IMR-90 (cell line): ENCODE measurements at regions of chr13 and their contacts with region 1.

Region 1: DNA sequence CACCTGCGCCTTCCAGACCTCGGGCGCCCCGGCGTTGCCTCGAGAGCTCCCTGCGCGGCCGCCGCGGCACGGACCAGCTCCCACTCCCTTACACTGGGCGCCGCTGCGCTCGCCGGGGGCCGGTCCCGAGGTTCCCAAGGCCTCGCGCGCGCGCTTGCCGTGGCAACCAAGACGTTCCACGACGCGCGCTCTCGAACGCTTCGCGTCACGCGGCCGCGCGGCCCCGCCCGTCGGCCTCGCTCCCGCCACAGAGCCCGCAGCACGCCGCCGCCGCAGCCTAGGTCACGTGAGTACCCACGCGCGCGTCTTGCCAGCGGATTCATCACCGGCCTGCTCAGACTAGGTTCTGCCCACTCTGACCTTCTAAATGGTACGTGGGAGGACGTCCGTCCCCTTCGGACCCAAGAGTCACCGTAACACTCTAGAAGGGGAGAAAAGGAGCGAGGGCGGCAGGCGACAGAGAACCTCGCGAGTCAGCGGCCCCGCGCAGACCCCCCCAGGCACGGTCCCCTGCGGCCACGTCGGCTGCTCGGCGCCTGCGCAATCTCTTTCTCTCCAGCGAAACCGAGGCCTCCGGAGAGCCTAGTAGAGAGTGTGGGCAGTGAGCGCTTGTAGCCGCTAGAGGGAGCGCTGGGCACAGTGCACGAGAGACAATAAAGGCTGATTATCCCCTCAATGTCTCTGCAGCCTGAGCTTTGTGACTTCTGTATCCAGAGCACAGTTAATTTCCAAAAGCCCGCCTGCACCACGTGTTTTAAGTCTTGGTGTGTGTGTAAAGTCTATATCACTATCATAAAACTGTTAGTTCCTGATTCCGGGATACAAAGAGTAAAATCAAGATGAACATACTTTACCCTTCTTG is at the start of gene SPART:
- DNase-seq: peak; percentile 88
- ATAC-seq: peak; percentile 89
- H3K4me3 ChIP-seq: peak within 1 kb of the TSS; percentile 82
- H3K27ac ChIP-seq: peak within 1 kb of the TSS; percentile 96
- H3K4me1 ChIP-seq: peaks cover 5% of the 10 kb centered on the region; the same call in 1 of the 2 replicates
- H3K27me3 ChIP-seq: no peaks in the 10 kb centered on the region
- CTCF ChIP-seq: peak; percentile 99
- POLR2A ChIP-seq: peak; percentile 66
- RAD21 ChIP-seq: peak; percentile 86
- total RNA-seq, gene SPART: 86.4 and 110 TPM in 2 replicates

Region 2: DNA sequence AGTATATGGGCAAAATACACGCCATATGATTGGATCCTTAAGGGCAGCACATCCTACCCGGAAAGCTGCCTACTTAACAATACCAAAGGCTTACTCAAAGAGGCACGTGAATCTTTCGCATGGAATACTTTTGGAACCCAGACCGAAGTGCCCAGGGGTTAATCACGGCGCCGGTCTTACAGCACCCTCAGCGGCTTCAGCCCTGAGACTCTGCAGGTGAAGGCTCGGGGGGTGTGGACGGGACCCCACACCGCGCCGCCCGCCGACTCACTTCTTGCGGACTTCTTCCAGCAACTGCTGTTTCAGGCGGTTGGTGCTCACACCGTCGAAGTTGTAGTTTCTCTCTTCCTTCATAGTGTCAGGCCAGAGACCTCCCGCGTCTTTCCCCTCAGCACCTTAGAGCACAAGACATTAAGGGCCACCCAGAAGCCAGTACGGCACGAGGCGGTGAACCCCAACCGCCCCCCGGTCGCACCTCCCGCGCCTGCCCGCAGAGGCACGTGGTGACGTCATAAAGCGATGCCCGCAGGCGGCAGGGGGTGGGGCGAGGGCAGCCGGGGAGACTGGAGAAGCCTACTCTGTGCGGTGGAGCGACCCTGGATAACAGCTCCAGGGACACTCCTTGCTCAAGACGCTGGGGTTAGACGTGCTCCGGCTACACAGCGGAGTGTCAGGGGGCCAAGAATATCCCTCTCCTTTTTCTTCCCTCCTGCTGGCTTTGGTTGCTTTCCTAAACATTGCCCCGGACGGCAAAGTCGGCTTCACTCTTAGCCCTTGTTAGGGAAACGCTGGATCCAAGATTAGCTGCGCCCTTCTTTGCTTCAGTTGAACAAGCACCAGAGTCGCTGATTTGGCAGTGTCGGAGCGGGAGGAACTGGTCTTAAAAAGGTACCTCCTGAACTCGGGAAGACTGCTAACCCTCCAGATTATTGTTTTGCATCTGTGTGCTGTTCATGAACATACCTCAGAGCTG is 48.8 kb before region 1 on chr13 and contains the start of gene CCDC169:
- CTCF ChIA-PET with region 1: interaction called, 4 read pairs
- POLR2A ChIA-PET with region 1: interaction called, 9 read pairs
- dilution Hi-C with region 1: no loop called
- in situ Hi-C with region 1: no loop called
- intact Hi-C with region 1: loop called (anchors 5 kb)
- DNase-seq: peak; percentile 51
- ATAC-seq: peak; percentile 93
- H3K4me3 ChIP-seq: peak within 1 kb of the TSS; percentile 67
- H3K27ac ChIP-seq: peak within 1 kb of the TSS; percentile 56
- H3K4me1 ChIP-seq: peaks cover 2% of the 10 kb centered on the region; the same call in 1 of the 2 replicates
- H3K27me3 ChIP-seq: no peaks in the 10 kb centered on the region
- CTCF ChIP-seq: no peak
- POLR2A ChIP-seq: no peak
- RAD21 ChIP-seq: no peak
- total RNA-seq, gene CCDC169: 0.54 and 0.83 TPM in 2 replicates

Region 3: GRCh38 chr13:36395280-36395679 is 48.8 kb after region 1 on chr13:
- CTCF ChIA-PET with region 1: interaction called, 4 read pairs
- POLR2A ChIA-PET with region 1: no interaction called
- dilution Hi-C with region 1: no loop called
- in situ Hi-C with region 1: no loop called
- intact Hi-C with region 1: loop called (anchors 1 kb)
- DNase-seq: peak; percentile 66
- ATAC-seq: peak; percentile 93
- H3K4me3 ChIP-seq: no peak overlapping the region
- H3K27ac ChIP-seq: no peak overlapping the region
- H3K4me1 ChIP-seq: no peaks in the 10 kb centered on the region
- H3K27me3 ChIP-seq: peaks cover 2% of the 10 kb centered on the region; the same call in 1 of the 2 replicates
- CTCF ChIP-seq: peak; percentile 71
- POLR2A ChIP-seq: no peak
- RAD21 ChIP-seq: peak; percentile 60

Region 4: GRCh38 chr13:36736119-36736726 is 389.8 kb after region 1 on chr13:
- CTCF ChIA-PET with region 1: interaction called, 5 read pairs
- POLR2A ChIA-PET with region 1: no interaction called
- dilution Hi-C with region 1: no loop called
- in situ Hi-C with region 1: no loop called
- intact Hi-C with region 1: loop called (anchors 1 kb)
- DNase-seq: peak; percentile 62
- ATAC-seq: peak; percentile 74
- H3K4me3 ChIP-seq: no peak overlapping the region
- H3K27ac ChIP-seq: no peak overlapping the region
- H3K4me1 ChIP-seq: no peaks in the 10 kb centered on the region
- H3K27me3 ChIP-seq: peaks cover 2% of the 10 kb centered on the region; the same call in 1 of the 2 replicates
- CTCF ChIP-seq: peak; percentile 64
- POLR2A ChIP-seq: no peak
- RAD21 ChIP-seq: peak; percentile 60

Region 5: GRCh38 chr13:36778083-36778671 is 431.7 kb after region 1 on chr13:
- CTCF ChIA-PET with region 1: no interaction called
- POLR2A ChIA-PET with region 1: no interaction called
- dilution Hi-C with region 1: no loop called
- in situ Hi-C with region 1: no loop called
- intact Hi-C with region 1: loop called (anchors 1 kb)
- DNase-seq: peak; percentile 74
- ATAC-seq: peak; percentile 94
- H3K4me3 ChIP-seq: peak overlapping the region; percentile 53
- H3K27ac ChIP-seq: peak overlapping the region; percentile 65; the same call in 1 of the 2 replicates
- H3K4me1 ChIP-seq: peaks cover 4% of the 10 kb centered on the region; the same call in 1 of the 2 replicates
- H3K27me3 ChIP-seq: peaks cover 2% of the 10 kb centered on the region
- CTCF ChIP-seq: no peak
- POLR2A ChIP-seq: no peak
- RAD21 ChIP-seq: no peak

Region 6: DNA sequence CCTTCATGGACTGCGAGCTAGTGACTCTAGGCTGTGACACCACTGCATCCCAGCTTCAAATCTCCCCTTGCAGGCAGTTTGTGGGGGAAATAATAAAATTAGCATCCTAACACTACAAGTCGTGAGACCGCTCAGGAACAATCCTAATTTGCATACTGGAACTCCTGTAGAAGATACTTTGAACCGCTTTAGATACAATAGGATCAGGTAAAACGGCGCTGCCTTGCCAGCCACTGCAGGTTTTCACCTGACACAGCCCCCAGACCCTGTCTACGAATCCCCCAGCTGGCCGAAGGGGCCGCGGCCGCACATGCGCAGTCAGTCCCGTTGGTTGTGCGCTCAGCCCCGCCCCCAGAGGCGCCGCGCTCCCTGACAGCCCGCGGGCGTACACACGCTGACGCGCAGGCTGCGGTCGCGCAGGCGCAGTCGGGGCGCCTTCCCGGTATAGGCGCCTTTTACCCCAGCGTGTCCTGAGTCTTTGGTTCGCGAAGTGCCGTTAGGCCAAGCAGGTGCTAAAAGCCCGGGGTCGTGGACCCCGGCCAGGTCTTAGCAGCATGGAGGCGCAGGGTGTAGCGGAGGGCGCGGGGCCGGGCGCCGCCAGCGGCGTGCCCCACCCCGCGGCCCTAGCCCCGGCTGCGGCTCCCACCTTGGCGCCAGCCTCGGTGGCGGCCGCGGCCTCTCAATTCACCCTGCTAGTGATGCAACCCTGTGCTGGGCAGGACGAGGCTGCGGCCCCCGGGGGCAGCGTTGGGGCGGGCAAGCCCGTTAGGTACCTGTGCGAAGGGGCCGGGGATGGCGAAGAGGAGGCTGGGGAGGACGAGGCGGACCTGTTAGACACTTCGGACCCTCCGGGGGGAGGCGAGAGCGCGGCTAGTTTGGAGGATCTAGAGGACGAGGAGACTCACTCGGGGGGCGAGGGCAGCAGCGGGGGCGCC is 472.6 kb after region 1 on chr13 and contains the start of gene RFXAP:
- CTCF ChIA-PET with region 1: no interaction called
- POLR2A ChIA-PET with region 1: no interaction called
- dilution Hi-C with region 1: no loop called
- in situ Hi-C with region 1: no loop called
- intact Hi-C with region 1: loop called (anchors 10 kb)
- DNase-seq: peak; percentile 81
- ATAC-seq: peak; percentile 99
- H3K4me3 ChIP-seq: peak within 1 kb of the TSS; percentile 85
- H3K27ac ChIP-seq: peak within 1 kb of the TSS; percentile 31; the same call in 1 of the 2 replicates
- H3K4me1 ChIP-seq: no peaks in the 10 kb centered on the region
- H3K27me3 ChIP-seq: no peaks in the 10 kb centered on the region
- CTCF ChIP-seq: no peak; the same call in 1 of the 2 replicates
- POLR2A ChIP-seq: no peak
- RAD21 ChIP-seq: no peak
- total RNA-seq, gene RFXAP: 0.54 and 0.83 TPM in 2 replicates